ENCODE measurements at regions of chr14 and their contacts with region 1.

Region 1: DNA sequence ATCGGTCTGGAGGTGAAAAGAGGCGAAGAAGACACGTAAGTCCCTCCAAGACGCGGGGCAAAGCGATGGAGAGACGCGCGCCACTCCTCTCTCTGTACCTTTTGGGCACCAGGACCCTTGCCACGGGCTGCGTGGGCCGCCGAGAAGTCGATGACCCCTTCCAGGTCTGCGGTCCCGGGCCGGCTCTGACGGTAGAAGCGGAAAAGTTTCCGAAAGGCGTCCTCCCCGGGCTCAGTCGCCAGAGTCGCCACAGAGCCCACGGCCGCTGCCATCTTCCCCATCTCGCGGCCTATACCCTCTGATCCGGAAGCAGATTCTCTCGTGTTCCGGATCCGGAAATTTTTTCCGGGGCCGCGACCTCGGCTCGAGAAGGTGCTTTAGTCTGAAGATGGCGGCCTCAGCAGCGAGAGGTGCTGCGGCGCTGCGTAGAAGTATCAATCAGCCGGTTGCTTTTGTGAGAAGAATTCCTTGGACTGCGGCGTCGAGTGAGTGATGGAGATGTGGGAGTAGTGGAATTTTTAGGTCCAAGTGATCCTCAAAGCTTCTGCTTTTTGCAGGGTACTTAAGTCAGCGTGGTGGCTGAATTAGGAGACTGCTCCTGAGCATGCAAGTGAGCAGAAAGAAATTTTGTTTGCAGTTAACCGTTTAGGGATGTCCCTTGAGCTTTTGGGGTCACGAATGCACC is at the starts of genes ALKBH1 and SLIRP:
- DNase-seq: peak; percentile 88 to 92 (median 90)
- ATAC-seq: peak; percentile 96 to 98 (median 98)
- H3K4me3 ChIP-seq: peak within 1 kb of the TSS; percentile 61 to 97 (median 91)
- H3K27ac ChIP-seq: peak within 1 kb of the TSS; percentile 20 to 82 (median 70)
- H3K4me1 ChIP-seq: peaks cover 0 to 37% (median 27%) of the 10 kb centered on the region in 12 donors
- H3K27me3 ChIP-seq: no peaks in the 10 kb centered on the region
- CTCF ChIP-seq: peak in 1 of 12 donors; percentile 1
- POLR2A ChIP-seq: peak in 1 of 2 donors; percentile 58
- total RNA-seq, gene ALKBH1: 10.8 to 16.5 (median 12.5) TPM
- total RNA-seq, gene SLIRP: 112 to 309 (median 169) TPM

Region 2: DNA sequence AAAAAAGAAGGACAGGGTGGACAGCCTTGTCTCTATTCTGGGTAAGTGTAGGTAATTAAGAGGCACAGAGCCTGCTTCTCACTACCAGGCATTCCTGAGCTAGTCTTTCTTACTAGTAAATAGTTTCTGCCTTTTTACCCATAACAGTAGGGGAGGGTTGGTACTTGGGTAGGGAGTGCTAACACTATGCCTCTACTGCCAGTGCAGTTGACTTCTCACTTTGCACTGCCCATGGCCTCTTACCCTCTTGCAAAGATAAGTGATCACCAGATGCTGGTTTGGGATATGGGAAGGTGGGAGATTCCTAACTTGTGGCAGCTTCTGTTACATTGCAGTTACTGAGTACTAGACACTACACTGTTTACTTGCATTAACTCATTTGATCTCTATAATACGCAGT is 238.3 kb before region 1 on chr14:
- intact Hi-C with region 1: loop called in 1 of 10 experiments (anchors 10 kb)
- DNase-seq: no peak
- ATAC-seq: no peak
- H3K4me3 ChIP-seq: no peak overlapping the region
- H3K27ac ChIP-seq: no peak overlapping the region
- H3K4me1 ChIP-seq: peaks cover 0 to under 1% (median 0%) of the 10 kb centered on the region in 12 donors
- H3K27me3 ChIP-seq: no peaks in the 10 kb centered on the region
- CTCF ChIP-seq: no peak
- POLR2A ChIP-seq: no peak

Region 3: GRCh38 chr14:77659831-77660230 is 48.0 kb before region 1 on chr14:
- intact Hi-C with region 1: loop called in 9 of 10 experiments (anchors 2 to 10 kb)
- DNase-seq: no peak
- ATAC-seq: peak in 2 of 4 donors; percentile 31
- H3K4me3 ChIP-seq: no peak overlapping the region
- H3K27ac ChIP-seq: peak overlapping the region in 1 of 12 donors; percentile 88
- H3K4me1 ChIP-seq: peaks cover 0 to 43% (median 0%) of the 10 kb centered on the region in 12 donors
- H3K27me3 ChIP-seq: no peaks in the 10 kb centered on the region
- CTCF ChIP-seq: no peak
- POLR2A ChIP-seq: no peak

Measured in heart left ventricle (tissue), 16 donors.